Activated T-helper 1 cell treated with anti-CD3 and anti-CD28 coated beads, Interleukin-12 subunit alpha, Interleukin-12 subunit beta, Interleukin-2, Interleukin-4 antibody, amounts not matched to agents 30 ng/mL and 10 ng/mL and 1 ng/mL, durations not matched to agents 14 hours and 24 hours and 36 hours (primary cell): ENCODE measurements at regions of chr11 and their contacts with region 1.

Region 1: DNA sequence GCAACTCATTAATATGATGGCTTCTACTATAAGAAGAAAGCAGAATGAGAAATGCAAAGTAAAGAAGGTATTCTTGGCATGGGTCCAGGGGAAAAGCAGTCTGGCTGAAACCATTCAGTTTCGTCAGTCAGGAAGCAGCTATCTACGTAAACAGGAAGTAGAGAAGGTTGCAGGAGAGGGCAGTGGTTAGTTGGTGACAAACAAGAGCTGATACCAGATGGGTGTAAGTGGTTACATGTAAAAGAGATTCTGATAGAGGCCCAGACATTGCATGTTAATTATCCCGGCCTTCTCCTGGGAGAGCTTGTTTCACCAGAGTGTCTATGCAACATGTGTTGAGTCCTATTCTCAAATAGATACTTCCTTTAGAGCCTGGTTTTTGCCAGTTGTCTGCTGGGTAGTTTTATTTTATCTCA is 58.4 kb upstream of the PSMA1 start:
- DNase-seq: peak; percentile 76
- H3K4me3 Mint-ChIP-seq: peak overlapping the region; percentile 21
- H3K27ac Mint-ChIP-seq: peak overlapping the region; percentile 84
- H3K4me1 Mint-ChIP-seq: peaks cover 71% of the 10 kb centered on the region
- H3K27me3 Mint-ChIP-seq: no peaks in the 10 kb centered on the region

Region 2: DNA sequence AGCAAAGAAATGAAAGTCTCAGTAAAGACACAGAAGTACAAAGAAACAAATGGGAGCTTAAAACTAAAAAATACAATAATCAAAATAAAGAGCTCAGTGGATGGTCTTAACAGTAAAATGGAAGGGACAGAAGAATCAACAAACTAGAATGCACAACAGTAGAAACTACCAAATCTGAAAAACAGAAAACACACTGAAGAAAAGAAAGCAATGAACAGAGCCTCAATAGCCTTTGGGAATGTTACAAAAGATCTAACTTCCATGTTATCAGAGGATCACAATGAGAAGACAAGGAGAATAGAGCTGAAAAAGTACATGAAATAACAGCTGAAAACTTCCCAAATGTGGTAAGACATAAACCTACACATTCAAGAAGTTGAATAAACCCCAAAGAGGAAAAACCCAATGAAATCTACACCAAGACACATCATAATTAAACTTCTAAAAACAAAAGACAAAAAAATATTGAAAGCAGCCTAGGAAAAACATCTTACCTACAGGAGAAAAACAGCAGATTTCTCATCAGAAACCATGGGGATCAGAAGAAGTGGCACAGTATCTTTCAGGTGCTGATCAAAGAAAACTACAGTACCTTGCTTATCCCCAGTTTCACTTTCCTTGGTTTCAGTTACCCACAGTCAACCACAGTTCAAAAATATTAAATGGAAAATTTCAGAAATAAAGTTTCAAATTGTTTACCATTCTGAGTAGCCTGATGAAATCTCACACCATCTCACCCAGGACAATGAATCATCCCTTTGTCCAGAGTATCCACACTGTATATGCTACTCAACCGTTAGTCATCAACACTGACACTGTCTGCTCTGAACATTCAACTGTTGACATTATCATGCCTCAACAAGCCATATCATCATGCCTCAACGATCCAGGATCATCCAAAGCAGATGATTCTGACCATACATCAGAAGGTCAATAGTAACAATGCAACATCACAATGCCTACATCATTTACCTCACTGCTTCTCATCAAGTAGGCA is 241.7 kb before region 1 on chr11:
- intact Hi-C with region 1: loop called (anchors 2 kb)
- DNase-seq: no peak
- H3K4me3 Mint-ChIP-seq: no peak overlapping the region
- H3K27ac Mint-ChIP-seq: peak overlapping the region; percentile 82
- H3K4me1 Mint-ChIP-seq: peaks cover 58% of the 10 kb centered on the region
- H3K27me3 Mint-ChIP-seq: no peaks in the 10 kb centered on the region

Region 3: DNA sequence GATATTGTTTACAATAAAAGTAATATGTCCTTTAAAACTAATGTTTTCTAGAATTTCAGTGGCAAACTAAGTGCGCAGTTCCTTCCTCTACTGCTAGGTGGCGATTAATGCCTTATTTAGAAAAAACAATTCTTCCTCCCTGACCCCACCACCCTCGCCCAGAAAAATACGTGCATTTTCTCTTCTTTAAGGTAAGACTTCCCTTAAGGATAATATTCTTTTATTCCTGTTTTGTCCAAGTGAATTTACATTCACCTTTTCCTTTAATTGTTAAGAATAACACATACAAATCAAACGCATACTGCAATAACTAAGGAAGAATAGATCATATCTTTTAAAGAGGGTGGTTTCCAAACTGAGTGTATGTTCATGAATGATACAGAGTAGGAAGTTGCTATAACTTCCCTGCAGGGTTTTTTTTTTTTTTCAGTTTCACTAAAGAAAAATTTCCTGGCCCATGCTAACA is 41.4 kb before region 1 on chr11:
- intact Hi-C with region 1: loop called (anchors 1 kb)
- DNase-seq: peak; percentile 12
- H3K4me3 Mint-ChIP-seq: peak overlapping the region; percentile 74
- H3K27ac Mint-ChIP-seq: peak overlapping the region; percentile 89
- H3K4me1 Mint-ChIP-seq: peaks cover 48% of the 10 kb centered on the region
- H3K27me3 Mint-ChIP-seq: no peaks in the 10 kb centered on the region

Region 4: GRCh38 chr11:14611939-14612338 is 33.4 kb after region 1 on chr11:
- intact Hi-C with region 1: loop called (anchors 1 kb)
- DNase-seq: no peak
- H3K4me3 Mint-ChIP-seq: peak overlapping the region; percentile 15
- H3K27ac Mint-ChIP-seq: peak overlapping the region; percentile 57
- H3K4me1 Mint-ChIP-seq: peaks cover 41% of the 10 kb centered on the region
- H3K27me3 Mint-ChIP-seq: no peaks in the 10 kb centered on the region

Region 5: DNA sequence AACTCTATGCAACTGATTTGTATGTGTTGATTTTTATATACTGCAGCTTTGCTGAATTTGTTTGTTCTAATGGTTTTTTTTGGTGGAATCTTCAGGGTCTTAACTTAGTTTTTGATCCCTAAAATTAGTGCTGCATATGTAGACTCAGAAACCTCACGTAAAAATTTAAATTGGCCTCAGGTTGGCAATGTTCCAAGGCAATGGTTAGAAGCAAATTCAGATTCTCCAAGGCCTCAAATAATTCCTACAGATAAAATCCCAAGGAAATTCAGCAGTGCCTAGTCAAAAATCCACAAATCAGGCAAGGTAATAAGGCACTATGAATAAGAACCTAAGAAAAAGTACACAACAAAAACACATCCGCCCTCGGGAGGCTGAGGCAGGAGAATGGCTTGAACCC is 74.5 kb after region 1 on chr11:
- intact Hi-C with region 1: no loop called
- DNase-seq: no peak
- H3K4me3 Mint-ChIP-seq: no peak overlapping the region
- H3K27ac Mint-ChIP-seq: no peak overlapping the region
- H3K4me1 Mint-ChIP-seq: peaks cover 79% of the 10 kb centered on the region
- H3K27me3 Mint-ChIP-seq: no peaks in the 10 kb centered on the region

Region 6: GRCh38 chr11:14764579-14765527 is 186.3 kb after region 1 on chr11:
- intact Hi-C with region 1: loop called (anchors 1 kb)
- DNase-seq: peak; percentile 60
- H3K4me3 Mint-ChIP-seq: no peak overlapping the region
- H3K27ac Mint-ChIP-seq: no peak overlapping the region
- H3K4me1 Mint-ChIP-seq: peaks cover 41% of the 10 kb centered on the region
- H3K27me3 Mint-ChIP-seq: no peaks in the 10 kb centered on the region